ENCODE measurements at regions of chr10 and their contacts with region 1.

Region 1: GRCh38 chr10:127021801-127022200 is 116.6 kb downstream of the DOCK1 start:
- DNase-seq: no peak
- ATAC-seq: no peak
- H3K4me3 Mint-ChIP-seq: no peak overlapping the region
- H3K27ac Mint-ChIP-seq: no peak overlapping the region
- H3K4me1 Mint-ChIP-seq: no peaks in the 10 kb centered on the region
- H3K27me3 Mint-ChIP-seq: no peaks in the 10 kb centered on the region

Region 2: GRCh38 chr10:127034790-127035189 is 13.0 kb after region 1 on chr10:
- CTCF ChIA-PET with region 1: no interaction called
- POLR2A ChIA-PET with region 1: interaction called, 16 read pairs
- intact Hi-C with region 1: no loop called
- DNase-seq: no peak
- ATAC-seq: no peak
- H3K4me3 Mint-ChIP-seq: no peak overlapping the region
- H3K27ac Mint-ChIP-seq: no peak overlapping the region
- H3K4me1 Mint-ChIP-seq: no peaks in the 10 kb centered on the region
- H3K27me3 Mint-ChIP-seq: no peaks in the 10 kb centered on the region